OCI-LY7 (cell line): ENCODE measurements at regions of chr11 and their contacts with region 1.

Region 1: DNA sequence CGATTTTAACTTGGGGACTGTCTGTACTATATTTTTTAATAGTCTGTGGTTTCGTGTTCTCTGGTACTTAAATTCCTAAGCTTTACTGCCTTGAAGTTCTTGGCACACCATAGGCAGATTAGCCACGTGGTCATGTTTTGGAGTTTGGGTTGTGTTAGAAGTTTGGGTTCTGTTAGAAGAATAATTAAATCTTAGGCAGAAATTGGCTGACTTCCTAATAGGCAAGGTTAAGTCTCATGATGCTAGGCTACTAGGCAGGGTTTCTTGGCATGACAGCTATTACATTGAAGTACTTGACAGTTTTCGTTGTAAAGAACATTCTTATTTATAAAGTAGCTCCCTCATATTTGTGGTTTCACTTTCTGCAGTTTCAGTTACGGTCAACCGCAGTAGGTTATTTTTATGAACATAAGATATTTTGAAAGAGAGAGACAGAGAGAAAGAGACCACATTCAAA is 30.0 kb upstream of the MMP7 start:
- DNase-seq: peak; percentile 59
- H3K4me3 ChIP-seq: peak overlapping the region; percentile 52
- H3K27ac ChIP-seq: peak overlapping the region; percentile 88
- H3K4me1 ChIP-seq: peaks cover 44% of the 10 kb centered on the region
- CTCF ChIP-seq: no peak

Region 2: DNA sequence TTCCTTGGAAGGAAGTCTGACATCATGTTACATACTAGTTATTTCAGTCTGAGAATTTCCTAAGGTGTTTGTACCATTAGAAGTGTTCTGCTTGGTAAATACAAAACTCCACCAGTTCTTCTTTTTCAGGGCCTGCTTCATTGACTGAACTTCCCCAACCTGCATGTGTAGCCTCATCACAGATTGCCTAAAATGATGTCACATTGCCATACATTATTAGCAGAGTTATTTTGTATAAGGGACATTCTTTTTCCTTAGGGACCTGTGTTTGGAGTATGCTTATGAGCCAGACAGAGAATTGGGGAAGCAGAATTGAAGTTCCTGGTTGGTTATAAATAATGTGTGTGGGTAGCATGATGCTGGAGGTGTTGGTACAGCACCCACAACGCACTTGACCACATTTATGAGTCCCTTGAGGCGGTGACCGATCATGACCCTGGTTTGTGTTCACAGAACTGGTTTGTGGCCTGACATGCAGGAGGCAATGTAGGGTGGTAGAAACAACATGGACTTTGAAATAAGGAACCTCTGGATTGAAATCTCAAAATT is 13.6 kb before region 1 on chr11:
- CTCF ChIA-PET with region 1: interaction called, 6 read pairs
- POLR2A ChIA-PET with region 1: interaction called, 20 read pairs
- intact Hi-C with region 1: no loop called
- DNase-seq: peak; percentile 18
- H3K4me3 ChIP-seq: no peak overlapping the region
- H3K27ac ChIP-seq: no peak overlapping the region
- H3K4me1 ChIP-seq: peaks cover 15% of the 10 kb centered on the region
- CTCF ChIP-seq: no peak

Region 3: DNA sequence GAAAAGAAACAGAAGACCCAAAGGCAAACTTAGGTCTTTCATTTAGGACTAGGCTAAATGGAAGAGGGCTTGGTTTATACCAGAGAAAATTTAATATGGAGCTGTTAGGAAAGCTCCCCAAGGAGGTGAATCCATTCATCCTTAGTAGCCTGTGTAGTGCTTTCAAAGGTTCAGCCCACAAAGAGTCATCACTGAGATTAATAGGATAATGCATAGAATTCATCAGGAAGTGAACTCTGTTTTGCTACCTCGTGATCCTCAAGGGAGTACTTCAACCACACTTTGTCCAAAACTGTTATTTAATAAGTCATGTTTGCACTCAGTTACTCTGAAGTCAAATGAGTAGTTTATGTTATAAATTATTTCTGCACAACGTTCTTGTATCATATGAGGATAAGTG is 13.3 kb after region 1 on chr11:
- CTCF ChIA-PET with region 1: no interaction called
- POLR2A ChIA-PET with region 1: interaction called, 10 read pairs
- intact Hi-C with region 1: no loop called
- DNase-seq: no peak
- H3K4me3 ChIP-seq: no peak overlapping the region
- H3K27ac ChIP-seq: no peak overlapping the region
- H3K4me1 ChIP-seq: peaks cover 5% of the 10 kb centered on the region
- CTCF ChIP-seq: no peak